ENCODE measurements at regions of chr19 and their contacts with region 1.

Region 1: GRCh38 chr19:21851596-21852345 is 15.8 kb upstream of the ZNF43 start:
- H3K4me3 Mint-ChIP-seq: peak overlapping the region; percentile 91
- H3K27ac Mint-ChIP-seq: peak overlapping the region; percentile 88
- H3K4me1 Mint-ChIP-seq: no peaks in the 10 kb centered on the region
- H3K27me3 Mint-ChIP-seq: no peaks in the 10 kb centered on the region

Region 2: DNA sequence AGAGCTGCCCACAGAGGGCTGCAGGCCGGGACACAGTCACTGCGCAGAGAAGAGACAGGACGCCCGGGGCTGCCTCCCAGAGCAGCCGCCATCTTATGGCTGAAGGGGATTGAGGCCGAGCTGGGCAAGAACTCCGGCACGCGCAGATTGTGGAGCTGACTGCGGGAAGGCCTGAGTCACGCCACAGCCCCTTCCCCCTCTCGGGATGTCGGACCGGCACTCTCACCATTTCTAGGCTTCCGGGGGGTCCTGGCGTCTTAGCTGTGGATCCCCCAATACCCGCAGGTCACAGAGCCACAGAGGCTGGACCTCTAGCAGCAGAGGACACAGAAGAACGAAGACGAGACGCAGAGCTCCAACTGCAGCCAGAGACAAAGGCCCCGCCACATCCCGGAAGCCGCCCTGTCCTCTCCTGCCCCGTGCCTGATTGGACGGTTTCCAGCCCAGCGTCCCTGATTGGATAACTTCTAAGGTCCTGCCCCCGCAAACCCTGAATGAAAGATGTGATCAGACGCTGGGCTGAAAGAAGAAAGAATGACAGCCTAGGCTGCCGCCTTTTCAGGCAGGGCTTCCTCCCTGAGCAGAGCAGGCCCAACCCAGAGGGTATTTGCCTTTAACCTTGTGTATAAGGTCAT is 15.8 kb before region 1 on chr19 and contains the start of gene ZNF43:
- intact Hi-C with region 1: loop called (anchors 1 kb)
- H3K4me3 Mint-ChIP-seq: peak within 1 kb of the TSS; percentile 100
- H3K27ac Mint-ChIP-seq: peak within 1 kb of the TSS; percentile 99
- H3K4me1 Mint-ChIP-seq: peaks cover 6% of the 10 kb centered on the region
- H3K27me3 Mint-ChIP-seq: no peaks in the 10 kb centered on the region